ENCODE measurements at regions of chr20 and their contacts with region 1.

Region 1: GRCh38 chr20:46545077-46545826 is 5.2 kb downstream of the OCSTAMP start:
- DNase-seq: peak; percentile 43
- H3K4me3 Mint-ChIP-seq: peak overlapping the region; percentile 42
- H3K27ac Mint-ChIP-seq: peak overlapping the region; percentile 86
- H3K4me1 Mint-ChIP-seq: peaks cover 18% of the 10 kb centered on the region
- H3K27me3 Mint-ChIP-seq: peaks cover 6% of the 10 kb centered on the region

Region 2: GRCh38 chr20:46400828-46401477 is 144.3 kb before region 1 on chr20:
- intact Hi-C with region 1: loop called (anchors 5 kb)
- DNase-seq: peak; percentile 29
- H3K4me3 Mint-ChIP-seq: peak overlapping the region; percentile 73
- H3K27ac Mint-ChIP-seq: peak overlapping the region; percentile 84
- H3K4me1 Mint-ChIP-seq: peaks cover 56% of the 10 kb centered on the region
- H3K27me3 Mint-ChIP-seq: no peaks in the 10 kb centered on the region

Region 3: DNA sequence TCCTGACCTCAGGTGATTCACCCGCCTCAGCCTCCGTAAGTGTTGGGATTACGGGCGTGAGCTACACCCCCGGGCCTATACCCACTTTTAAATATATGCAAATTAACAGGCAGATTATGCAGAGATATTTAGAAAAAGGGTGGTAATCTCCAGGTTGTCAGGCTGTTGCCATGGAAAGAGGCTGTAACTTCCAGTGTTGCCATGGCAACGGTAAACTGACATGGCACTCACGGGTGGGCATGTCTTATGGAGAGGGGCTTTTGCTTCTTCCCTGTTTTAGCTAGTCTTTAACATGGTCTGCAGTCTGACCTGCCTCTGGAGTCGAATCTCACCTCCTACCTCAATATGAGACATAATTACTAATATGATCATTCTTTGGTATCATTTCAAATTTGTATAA is 76.7 kb before region 1 on chr20:
- intact Hi-C with region 1: no loop called
- DNase-seq: no peak
- H3K4me3 Mint-ChIP-seq: no peak overlapping the region
- H3K27ac Mint-ChIP-seq: no peak overlapping the region
- H3K4me1 Mint-ChIP-seq: no peaks in the 10 kb centered on the region
- H3K27me3 Mint-ChIP-seq: peaks cover 9% of the 10 kb centered on the region

Region 4: GRCh38 chr20:46512943-46513844 is 32.1 kb before region 1 on chr20 and contains the start of gene ZNF334:
- intact Hi-C with region 1: loop called (anchors 2 kb)
- DNase-seq: peak; percentile 29
- H3K4me3 Mint-ChIP-seq: peak within 1 kb of the TSS; percentile 80
- H3K27ac Mint-ChIP-seq: peak within 1 kb of the TSS; percentile 70
- H3K4me1 Mint-ChIP-seq: peaks cover 26% of the 10 kb centered on the region
- H3K27me3 Mint-ChIP-seq: peaks cover 4% of the 10 kb centered on the region
- total RNA-seq, gene ZNF334: 1.2 and 1.4 TPM in 2 replicates

Region 5: DNA sequence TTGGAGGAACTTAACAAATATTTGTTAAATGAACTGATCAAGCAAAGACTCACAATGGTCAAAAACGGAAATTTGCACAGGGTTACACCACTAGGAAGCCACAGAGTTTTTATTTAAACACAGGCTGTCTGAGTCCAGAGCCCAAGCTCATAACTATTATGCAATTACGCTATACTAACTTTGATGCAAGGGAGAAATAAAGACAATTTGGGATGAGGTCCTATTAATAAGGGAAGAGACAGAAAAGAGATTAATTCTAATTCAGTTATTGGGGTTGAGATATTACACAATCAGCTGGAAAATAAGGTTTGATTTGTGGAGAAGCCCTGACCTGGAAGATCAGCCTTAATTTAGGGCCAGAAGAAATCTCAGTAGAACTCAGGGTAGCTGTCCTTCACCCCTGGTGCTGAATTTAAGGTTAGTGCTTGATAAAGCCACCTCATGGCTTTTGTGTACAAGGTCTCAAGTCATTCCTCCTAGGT is 21.4 kb before region 1 on chr20:
- intact Hi-C with region 1: no loop called
- DNase-seq: no peak
- H3K4me3 Mint-ChIP-seq: no peak overlapping the region
- H3K27ac Mint-ChIP-seq: no peak overlapping the region
- H3K4me1 Mint-ChIP-seq: peaks cover 2% of the 10 kb centered on the region
- H3K27me3 Mint-ChIP-seq: peaks cover 23% of the 10 kb centered on the region

Region 6: GRCh38 chr20:46562373-46563169 is 17.3 kb after region 1 on chr20:
- intact Hi-C with region 1: loop called (anchors 1 kb)
- DNase-seq: peak; percentile 51
- H3K4me3 Mint-ChIP-seq: no peak overlapping the region
- H3K27ac Mint-ChIP-seq: no peak overlapping the region
- H3K4me1 Mint-ChIP-seq: peaks cover 34% of the 10 kb centered on the region
- H3K27me3 Mint-ChIP-seq: peaks cover 3% of the 10 kb centered on the region

Region 7: DNA sequence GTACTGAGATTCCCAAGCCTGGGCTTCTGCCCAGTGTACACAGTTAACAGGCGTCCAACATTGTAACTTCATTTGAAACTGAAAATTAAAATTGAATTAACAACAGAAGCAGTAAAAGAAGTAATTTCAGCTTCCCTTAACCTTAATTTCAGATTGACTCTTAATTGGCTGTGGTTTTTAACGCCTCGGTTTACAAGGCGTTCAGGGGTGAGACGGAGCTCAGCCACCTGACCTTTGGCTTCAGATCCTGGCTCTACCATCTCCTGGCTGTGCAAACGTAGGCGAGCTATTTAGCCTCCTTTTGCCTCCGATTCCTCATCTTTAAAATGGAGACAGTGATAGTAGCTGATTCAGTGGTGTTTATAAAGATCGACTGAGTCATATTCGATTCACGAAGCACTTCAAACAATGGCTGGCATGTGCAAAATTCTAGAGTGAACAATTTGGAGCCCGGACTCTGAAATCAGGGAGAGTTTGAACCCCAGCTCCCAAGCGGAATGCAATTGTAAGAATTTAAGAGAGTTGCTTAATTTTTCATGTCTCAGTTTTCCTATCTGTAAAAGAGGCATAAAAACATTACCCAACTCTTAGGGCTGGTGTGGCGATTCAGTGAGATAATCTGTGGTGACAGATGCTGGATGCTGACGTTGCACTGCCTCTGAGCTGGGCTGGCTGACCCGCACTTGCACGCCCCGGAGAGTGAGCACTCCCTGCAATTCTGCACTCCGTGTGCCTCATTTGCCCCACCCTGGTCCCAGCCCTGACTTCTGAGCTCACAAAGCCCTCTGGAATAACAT is 28.7 kb after region 1 on chr20:
- intact Hi-C with region 1: no loop called
- DNase-seq: no peak
- H3K4me3 Mint-ChIP-seq: no peak overlapping the region
- H3K27ac Mint-ChIP-seq: no peak overlapping the region
- H3K4me1 Mint-ChIP-seq: peaks cover 9% of the 10 kb centered on the region
- H3K27me3 Mint-ChIP-seq: peaks cover 32% of the 10 kb centered on the region

Region 8: GRCh38 chr20:46621492-46621891 is 76.2 kb after region 1 on chr20:
- intact Hi-C with region 1: no loop called
- DNase-seq: no peak
- H3K4me3 Mint-ChIP-seq: no peak overlapping the region
- H3K27ac Mint-ChIP-seq: no peak overlapping the region
- H3K4me1 Mint-ChIP-seq: no peaks in the 10 kb centered on the region
- H3K27me3 Mint-ChIP-seq: peaks cover 50% of the 10 kb centered on the region

Region 9: GRCh38 chr20:46681032-46681854 is 136.0 kb after region 1 on chr20:
- intact Hi-C with region 1: loop called (anchors 1 kb)
- DNase-seq: peak; percentile 44
- H3K4me3 Mint-ChIP-seq: no peak overlapping the region
- H3K27ac Mint-ChIP-seq: no peak overlapping the region
- H3K4me1 Mint-ChIP-seq: peaks cover 26% of the 10 kb centered on the region
- H3K27me3 Mint-ChIP-seq: no peaks in the 10 kb centered on the region

Region 10: DNA sequence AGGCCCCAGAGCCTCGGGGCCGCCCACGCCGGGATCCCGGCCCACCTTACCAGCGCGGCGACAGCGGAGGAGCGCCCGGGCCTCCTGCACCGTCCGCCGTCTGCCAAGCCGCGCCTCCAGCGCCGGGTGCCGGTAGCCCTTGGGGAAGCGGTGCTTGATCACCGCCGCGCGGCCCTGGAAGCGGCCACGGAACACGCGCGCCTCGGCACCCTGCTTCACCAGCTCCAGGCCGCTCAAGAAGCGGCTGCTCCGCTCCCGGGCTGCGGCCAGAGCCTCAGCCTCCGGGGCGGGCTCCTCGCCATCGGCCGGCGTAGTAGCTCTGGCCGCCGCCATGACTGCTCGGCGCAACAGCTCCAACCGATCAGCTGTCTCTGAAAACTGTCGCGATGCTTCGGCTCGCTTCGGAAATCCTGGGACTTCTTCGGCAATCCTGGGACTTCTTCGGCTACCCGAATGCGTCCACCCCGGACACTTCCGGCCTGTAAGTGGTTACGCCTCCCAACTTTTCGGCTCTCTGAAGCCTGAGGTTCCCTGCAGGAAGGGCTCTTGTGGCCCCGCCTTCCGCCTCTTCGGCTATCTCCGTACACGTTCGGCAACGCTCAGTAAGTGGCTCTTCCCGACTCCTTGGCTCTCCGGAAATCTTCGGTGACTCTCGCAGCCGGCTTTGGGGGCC is 144.0 kb after region 1 on chr20 and contains the start of gene TP53RK:
- intact Hi-C with region 1: loop called (anchors 2 kb)
- DNase-seq: peak; percentile 95
- H3K4me3 Mint-ChIP-seq: peak within 1 kb of the TSS; percentile 88
- H3K27ac Mint-ChIP-seq: peak within 1 kb of the TSS; percentile 83
- H3K4me1 Mint-ChIP-seq: peaks cover 33% of the 10 kb centered on the region
- H3K27me3 Mint-ChIP-seq: no peaks in the 10 kb centered on the region
- total RNA-seq, gene TP53RK: 14.4 and 14.7 TPM in 2 replicates